CD4-positive, alpha-beta T cell (primary cell): ENCODE measurements at regions of chr1 and their contacts with region 1.

Region 1: DNA sequence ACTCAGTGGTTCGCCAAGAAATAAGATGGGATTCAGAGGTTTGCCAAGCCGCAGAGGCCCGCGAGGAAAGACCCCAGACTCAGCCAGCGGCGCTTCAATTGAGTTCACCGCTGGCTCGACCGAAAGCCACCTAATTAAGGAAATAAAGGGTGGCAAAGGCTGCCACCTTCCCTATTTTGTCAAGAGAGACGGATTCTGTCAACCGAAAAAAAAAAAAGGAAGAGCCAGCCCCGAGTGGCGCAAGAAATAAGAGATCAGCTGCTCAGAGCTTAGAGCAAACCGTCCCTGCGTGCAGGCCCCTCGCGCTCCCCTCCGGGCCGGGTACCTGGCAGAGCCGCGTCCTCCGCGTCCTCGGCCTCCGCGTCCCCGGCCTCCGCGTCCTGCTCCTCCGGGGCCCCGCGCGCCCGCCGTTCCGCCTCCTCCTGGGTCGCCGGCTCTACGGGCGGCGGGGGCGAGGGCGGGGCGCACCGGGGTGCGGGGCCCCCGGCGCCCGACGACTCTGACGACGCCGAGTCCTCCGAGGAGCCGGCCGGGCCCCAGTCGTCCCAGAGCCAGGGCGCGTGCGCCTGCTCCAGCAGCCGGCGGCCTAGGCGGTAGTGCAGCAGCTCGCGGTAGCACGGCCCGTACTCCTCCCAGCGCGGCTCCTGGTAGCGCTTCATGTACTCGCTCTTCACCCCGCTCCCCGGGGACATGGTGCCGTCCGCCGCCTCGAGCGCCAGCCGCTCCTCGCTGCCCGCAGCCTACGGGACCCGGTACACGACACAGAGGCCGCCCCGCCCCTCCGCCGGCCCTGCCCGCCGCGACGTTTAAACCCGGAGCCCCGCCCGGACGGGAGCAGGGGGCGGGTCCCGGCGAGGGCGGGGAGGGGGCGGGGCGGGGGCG is 832 bp downstream of the CCSAP start:
- DNase-seq: peak in 13 of 14 experiments; percentile 67 to 92 (median 78)
- ATAC-seq: peak; percentile 76
- H3K4me3 ChIP-seq: peak overlapping the region; percentile 73
- H3K4me3 Mint-ChIP-seq: peak overlapping the region; percentile 97
- H3K27ac ChIP-seq: peak overlapping the region in 1 of 2 donors; percentile 29
- H3K27ac Mint-ChIP-seq: peak overlapping the region; percentile 91
- H3K4me1 ChIP-seq: peaks cover 41% of the 10 kb centered on the region
- H3K4me1 Mint-ChIP-seq: peaks cover 50% of the 10 kb centered on the region
- H3K27me3 ChIP-seq: no peaks in the 10 kb centered on the region
- H3K27me3 Mint-ChIP-seq: peaks cover 12% of the 10 kb centered on the region
- CTCF ChIP-seq: no peak

Region 2: DNA sequence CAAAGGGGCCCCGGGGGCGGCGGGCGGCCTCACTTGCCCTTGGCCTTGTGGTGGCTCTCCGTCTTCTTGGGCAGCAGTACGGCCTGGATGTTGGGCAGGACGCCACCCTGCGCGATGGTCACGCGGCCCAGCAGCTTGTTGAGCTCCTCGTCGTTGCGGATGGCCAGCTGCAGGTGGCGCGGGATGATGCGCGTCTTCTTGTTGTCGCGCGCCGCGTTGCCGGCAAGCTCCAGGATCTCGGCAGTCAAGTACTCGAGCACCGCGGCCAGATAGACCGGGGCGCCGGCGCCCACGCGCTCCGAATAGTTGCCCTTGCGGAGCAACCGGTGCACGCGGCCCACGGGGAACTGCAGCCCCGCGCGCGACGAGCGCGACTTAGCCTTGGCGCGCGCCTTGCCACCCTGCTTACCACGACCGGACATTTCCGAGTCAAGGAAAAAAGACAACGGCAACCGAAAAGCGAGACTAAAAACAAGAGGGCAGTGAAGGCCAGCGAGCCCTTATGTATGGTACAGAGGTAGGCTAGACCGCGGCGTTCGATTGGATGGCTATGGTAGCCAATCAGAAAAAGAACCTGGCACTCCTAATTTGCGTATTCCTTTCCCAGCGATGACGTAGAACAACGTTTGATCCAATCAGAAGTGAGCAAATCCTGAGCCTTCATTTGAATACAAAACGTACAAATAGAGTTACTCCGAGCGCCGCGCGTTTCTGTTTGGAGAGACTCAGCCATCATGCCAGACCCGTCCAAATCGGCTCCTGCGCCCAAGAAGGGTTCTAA is 884.4 kb before region 1 on chr1:
- CTCF ChIA-PET with region 1: no interaction called
- POLR2A ChIA-PET with region 1: no interaction called
- intact Hi-C with region 1: loop called in 1 of 2 experiments (anchors 5 kb)
- DNase-seq: peak; percentile 68 to 99 (median 76)
- ATAC-seq: peak; percentile 83
- H3K4me3 ChIP-seq: peak overlapping the region; percentile 67
- H3K4me3 Mint-ChIP-seq: peak overlapping the region; percentile 95
- H3K27ac ChIP-seq: peak overlapping the region; percentile 68 to 94
- H3K27ac Mint-ChIP-seq: peak overlapping the region; percentile 98
- H3K4me1 ChIP-seq: peaks cover 30% of the 10 kb centered on the region
- H3K4me1 Mint-ChIP-seq: peaks cover 54% of the 10 kb centered on the region
- H3K27me3 ChIP-seq: no peaks in the 10 kb centered on the region
- H3K27me3 Mint-ChIP-seq: peaks cover 5% of the 10 kb centered on the region
- CTCF ChIP-seq: no peak

Region 3: DNA sequence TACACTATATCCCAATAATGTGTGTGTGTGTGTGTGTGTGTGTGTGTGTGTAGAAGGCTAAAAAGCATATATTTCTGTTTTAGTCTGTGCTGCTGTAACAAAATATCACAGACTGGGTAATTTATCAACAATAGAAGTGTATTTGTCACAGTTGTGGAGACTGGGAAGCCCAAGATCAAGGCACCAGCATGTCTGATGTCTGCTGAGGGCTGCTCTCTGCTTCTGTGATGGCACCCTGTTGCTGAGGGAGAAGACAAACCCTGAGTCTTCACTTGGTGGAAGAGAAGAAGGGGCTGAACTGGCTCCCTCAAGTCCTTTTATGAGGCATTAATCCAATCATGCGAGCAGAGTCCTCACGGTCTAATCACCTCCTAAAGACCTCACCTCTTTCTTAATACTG is 94.1 kb before region 1 on chr1:
- CTCF ChIA-PET with region 1: no interaction called
- POLR2A ChIA-PET with region 1: no interaction called
- intact Hi-C with region 1: no loop called
- DNase-seq: no peak
- ATAC-seq: no peak
- H3K4me3 ChIP-seq: no peak overlapping the region
- H3K4me3 Mint-ChIP-seq: no peak overlapping the region
- H3K27ac ChIP-seq: no peak overlapping the region
- H3K27ac Mint-ChIP-seq: no peak overlapping the region
- H3K4me1 ChIP-seq: peaks cover 37% of the 10 kb centered on the region
- H3K4me1 Mint-ChIP-seq: peaks cover 47% of the 10 kb centered on the region
- H3K27me3 ChIP-seq: no peaks in the 10 kb centered on the region
- H3K27me3 Mint-ChIP-seq: no peaks in the 10 kb centered on the region
- CTCF ChIP-seq: no peak

Region 4: DNA sequence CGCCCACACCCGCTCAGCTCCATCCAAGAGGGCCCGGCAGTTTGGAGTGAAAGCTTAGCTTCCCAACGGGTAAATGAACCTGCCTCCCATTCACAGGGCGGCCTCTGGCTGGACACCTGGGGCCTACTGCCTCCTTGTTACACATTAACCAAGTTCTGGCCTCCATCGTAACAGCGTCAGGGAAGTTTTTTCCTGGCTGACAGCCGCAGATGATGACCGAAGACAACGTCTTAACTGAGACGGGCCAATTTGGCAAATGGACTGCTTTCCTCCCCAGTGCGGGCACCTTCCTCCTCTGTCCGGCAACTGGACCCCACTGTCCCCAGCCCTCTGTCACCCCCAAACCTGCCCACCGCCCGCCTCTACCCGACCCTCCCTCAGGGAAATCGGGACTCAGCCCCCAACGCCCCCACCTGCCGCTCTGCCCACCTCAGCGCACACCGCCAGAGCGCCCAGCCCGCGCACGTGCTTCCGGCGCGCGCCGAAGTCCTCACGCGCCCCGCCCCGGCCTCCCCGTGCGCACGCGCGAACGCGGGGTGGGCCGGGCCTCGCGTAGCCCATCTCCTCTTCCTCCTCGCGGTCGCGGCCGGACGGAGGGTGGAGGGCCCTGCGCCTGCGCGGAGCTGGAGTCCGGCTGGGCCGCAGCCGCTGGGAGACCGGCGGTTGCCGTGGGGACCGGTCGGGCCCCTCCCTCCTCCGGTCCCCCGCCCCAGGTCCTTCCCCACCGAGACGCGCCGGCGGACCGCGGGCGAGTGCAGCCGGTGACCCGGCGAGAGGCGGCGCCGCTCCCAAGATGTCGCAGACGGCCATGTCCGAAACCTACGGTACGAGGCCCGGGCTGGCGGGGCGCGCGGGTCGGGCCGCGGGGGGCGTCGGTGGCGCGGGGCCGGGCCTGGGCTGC is 71.2 kb before region 1 on chr1 and contains the start of gene RAB4A:
- CTCF ChIA-PET with region 1: no interaction called
- POLR2A ChIA-PET with region 1: interaction called, 11 read pairs
- intact Hi-C with region 1: loop called (anchors 2 kb)
- DNase-seq: peak; percentile 38 to 90 (median 70)
- ATAC-seq: peak; percentile 87
- H3K4me3 ChIP-seq: peak within 1 kb of the TSS; percentile 80
- H3K4me3 Mint-ChIP-seq: peak within 1 kb of the TSS; percentile 99
- H3K27ac ChIP-seq: peak within 1 kb of the TSS in 1 of 2 donors; percentile 41
- H3K27ac Mint-ChIP-seq: peak within 1 kb of the TSS; percentile 77
- H3K4me1 ChIP-seq: peaks cover 34% of the 10 kb centered on the region
- H3K4me1 Mint-ChIP-seq: peaks cover 35% of the 10 kb centered on the region
- H3K27me3 ChIP-seq: no peaks in the 10 kb centered on the region
- H3K27me3 Mint-ChIP-seq: no peaks in the 10 kb centered on the region
- CTCF ChIP-seq: no peak
- total RNA-seq, gene RAB4A: 26.7 to 28.7 TPM

Region 5: GRCh38 chr1:229461032-229461668 is 119.1 kb after region 1 on chr1:
- CTCF ChIA-PET with region 1: no interaction called
- POLR2A ChIA-PET with region 1: no interaction called
- intact Hi-C with region 1: no loop called
- DNase-seq: no peak
- ATAC-seq: no peak
- H3K4me3 ChIP-seq: no peak overlapping the region
- H3K4me3 Mint-ChIP-seq: no peak overlapping the region
- H3K27ac ChIP-seq: no peak overlapping the region
- H3K27ac Mint-ChIP-seq: no peak overlapping the region
- H3K4me1 ChIP-seq: no peaks in the 10 kb centered on the region
- H3K4me1 Mint-ChIP-seq: no peaks in the 10 kb centered on the region
- H3K27me3 ChIP-seq: no peaks in the 10 kb centered on the region
- H3K27me3 Mint-ChIP-seq: no peaks in the 10 kb centered on the region
- CTCF ChIP-seq: no peak

Region 6: DNA sequence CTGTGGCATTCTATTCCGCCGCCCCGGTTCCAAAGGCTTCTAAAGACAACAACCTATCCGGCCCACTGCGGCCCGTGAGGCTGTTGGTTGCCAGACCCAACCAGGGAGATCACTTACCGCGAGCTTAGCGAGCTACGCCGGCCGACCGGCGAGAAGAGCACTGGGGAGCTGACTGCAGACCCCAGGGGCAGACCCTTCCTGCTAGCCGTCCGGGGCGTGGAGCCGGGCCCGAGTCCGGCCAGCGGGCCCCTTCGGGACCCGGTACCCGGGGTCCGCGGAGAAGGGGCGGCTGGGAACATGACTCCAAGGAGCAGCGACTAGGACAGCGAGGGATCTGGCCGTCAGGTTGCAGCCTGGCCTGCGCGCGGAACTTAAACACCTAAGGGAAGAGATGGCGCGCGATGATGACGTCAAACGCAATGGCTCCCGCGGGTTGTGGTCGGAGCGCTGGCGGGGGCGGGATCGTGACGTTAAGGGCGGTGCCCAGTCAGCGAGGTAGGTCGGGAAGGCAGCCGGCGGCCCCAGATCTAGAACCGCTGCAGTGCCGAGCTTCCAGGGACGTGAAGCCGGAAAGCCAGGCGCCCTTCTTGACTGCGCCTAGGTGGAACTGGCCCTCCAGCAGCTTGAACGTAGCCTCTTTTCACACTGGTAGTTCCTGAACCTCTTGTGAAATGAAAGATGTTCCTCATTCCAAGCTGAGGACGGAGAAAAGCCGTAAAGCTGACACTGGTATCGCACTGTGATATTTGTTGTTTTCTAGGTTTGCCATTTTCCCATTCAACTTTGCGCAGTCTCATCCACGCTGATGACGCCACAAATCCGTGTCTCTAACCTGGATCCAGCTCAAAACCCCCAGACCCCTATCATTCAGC is 166.2 kb after region 1 on chr1 and contains the start of gene NUP133:
- CTCF ChIA-PET with region 1: no interaction called
- POLR2A ChIA-PET with region 1: interaction called, 23 read pairs
- intact Hi-C with region 1: loop called in 1 of 2 experiments (anchors 2 kb)
- DNase-seq: peak; percentile 96 to 100 (median 98)
- ATAC-seq: peak; percentile 97
- H3K4me3 ChIP-seq: peak within 1 kb of the TSS; percentile 98
- H3K4me3 Mint-ChIP-seq: peak within 1 kb of the TSS; percentile 97
- H3K27ac ChIP-seq: peak within 1 kb of the TSS; percentile 90 to 93
- H3K27ac Mint-ChIP-seq: peak within 1 kb of the TSS; percentile 97
- H3K4me1 ChIP-seq: peaks cover 19% of the 10 kb centered on the region
- H3K4me1 Mint-ChIP-seq: peaks cover 33% of the 10 kb centered on the region
- H3K27me3 ChIP-seq: no peaks in the 10 kb centered on the region
- H3K27me3 Mint-ChIP-seq: no peaks in the 10 kb centered on the region
- CTCF ChIP-seq: no peak
- total RNA-seq, gene NUP133: 42.0 to 45.3 TPM

Region 7: GRCh38 chr1:229558571-229559335 is 216.7 kb after region 1 on chr1 and contains the start of gene ABCB10:
- CTCF ChIA-PET with region 1: interaction called, 3 read pairs
- POLR2A ChIA-PET with region 1: interaction called, 10 read pairs
- intact Hi-C with region 1: loop called in 1 of 2 experiments (anchors 5 kb)
- DNase-seq: peak; percentile 68 to 94 (median 84)
- ATAC-seq: peak; percentile 76
- H3K4me3 ChIP-seq: peak within 1 kb of the TSS; percentile 75
- H3K4me3 Mint-ChIP-seq: peak within 1 kb of the TSS; percentile 93
- H3K27ac ChIP-seq: peak within 1 kb of the TSS; percentile 35 to 61
- H3K27ac Mint-ChIP-seq: peak within 1 kb of the TSS; percentile 92
- H3K4me1 ChIP-seq: peaks cover 37% of the 10 kb centered on the region
- H3K4me1 Mint-ChIP-seq: peaks cover 44% of the 10 kb centered on the region
- H3K27me3 ChIP-seq: no peaks in the 10 kb centered on the region
- H3K27me3 Mint-ChIP-seq: no peaks in the 10 kb centered on the region
- CTCF ChIP-seq: peak; percentile 54
- total RNA-seq, gene ABCB10: 9.8 to 11.0 TPM

Region 8: DNA sequence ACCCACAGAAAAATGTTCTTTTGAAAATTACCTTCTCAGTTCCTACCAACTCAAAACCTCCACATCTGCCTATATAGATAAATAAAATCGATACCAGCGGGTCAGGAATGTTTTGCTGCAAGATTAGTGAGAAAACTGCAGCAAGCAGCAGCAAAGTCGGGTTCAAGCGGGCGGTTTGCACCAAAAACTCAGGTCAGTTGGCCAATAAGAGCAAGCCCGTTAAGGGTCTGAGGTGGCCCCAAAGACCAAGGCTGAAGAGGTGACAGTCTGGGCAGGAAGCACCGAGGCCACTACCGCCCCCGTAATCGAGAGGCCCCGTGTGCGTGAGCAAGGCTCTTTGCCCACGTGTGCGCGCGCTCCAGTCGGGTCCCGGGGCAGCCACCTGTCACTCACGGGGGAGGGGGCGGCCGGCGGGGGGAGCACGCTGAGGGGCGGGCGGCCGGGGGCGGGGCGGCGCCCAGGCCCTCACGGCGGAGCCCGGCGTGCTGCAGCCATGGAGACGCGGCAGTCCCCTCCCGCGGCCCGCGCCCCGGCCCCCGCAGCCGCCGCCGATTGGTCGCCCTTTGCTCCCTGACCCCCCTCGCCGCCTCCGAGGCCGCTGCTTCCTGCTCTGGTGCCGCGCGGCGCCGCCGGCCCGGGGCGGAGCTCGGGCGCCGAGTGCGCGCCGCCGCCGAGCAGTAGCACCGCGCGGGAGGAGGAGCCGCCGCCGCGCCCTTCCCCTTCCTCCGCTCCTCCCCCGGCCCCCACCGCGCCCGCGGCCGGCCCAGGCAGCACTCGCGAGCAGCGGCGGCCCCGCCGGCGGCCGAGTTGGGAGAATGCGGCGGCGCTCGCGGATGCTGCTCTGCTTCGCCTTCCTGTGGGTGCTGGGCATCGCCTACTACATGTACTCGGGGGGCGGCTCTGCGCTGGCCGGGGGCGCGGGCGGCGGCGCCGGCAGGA is 724.7 kb after region 1 on chr1 and contains the start of gene GALNT2:
- CTCF ChIA-PET with region 1: no interaction called
- POLR2A ChIA-PET with region 1: no interaction called
- intact Hi-C with region 1: loop called in 1 of 2 experiments (anchors 2 kb)
- DNase-seq: peak; percentile 74 to 97 (median 86)
- ATAC-seq: peak; percentile 91
- H3K4me3 ChIP-seq: peak within 1 kb of the TSS; percentile 85
- H3K4me3 Mint-ChIP-seq: peak within 1 kb of the TSS; percentile 97
- H3K27ac ChIP-seq: peak within 1 kb of the TSS; percentile 46 to 73
- H3K27ac Mint-ChIP-seq: peak within 1 kb of the TSS; percentile 93
- H3K4me1 ChIP-seq: peaks cover 15% of the 10 kb centered on the region
- H3K4me1 Mint-ChIP-seq: peaks cover 42% of the 10 kb centered on the region
- H3K27me3 ChIP-seq: no peaks in the 10 kb centered on the region
- H3K27me3 Mint-ChIP-seq: no peaks in the 10 kb centered on the region
- CTCF ChIP-seq: no peak
- total RNA-seq, gene GALNT2: 11.0 to 11.4 TPM